Activated naive CD4-positive, alpha-beta T cell treated with anti-CD3 and anti-CD28 coated beads for 36 hours (primary cell): ENCODE measurements at regions of chr16 and their contacts with region 1.

Region 1: GRCh38 chr16:65671-66137 is 6.7 kb downstream of the RHBDF1 start:
- DNase-seq: peak; percentile 93
- H3K4me3 Mint-ChIP-seq: no peak overlapping the region
- H3K27ac Mint-ChIP-seq: no peak overlapping the region
- H3K4me1 Mint-ChIP-seq: peaks cover 4% of the 10 kb centered on the region
- H3K27me3 Mint-ChIP-seq: peaks cover 12% of the 10 kb centered on the region

Region 2: DNA sequence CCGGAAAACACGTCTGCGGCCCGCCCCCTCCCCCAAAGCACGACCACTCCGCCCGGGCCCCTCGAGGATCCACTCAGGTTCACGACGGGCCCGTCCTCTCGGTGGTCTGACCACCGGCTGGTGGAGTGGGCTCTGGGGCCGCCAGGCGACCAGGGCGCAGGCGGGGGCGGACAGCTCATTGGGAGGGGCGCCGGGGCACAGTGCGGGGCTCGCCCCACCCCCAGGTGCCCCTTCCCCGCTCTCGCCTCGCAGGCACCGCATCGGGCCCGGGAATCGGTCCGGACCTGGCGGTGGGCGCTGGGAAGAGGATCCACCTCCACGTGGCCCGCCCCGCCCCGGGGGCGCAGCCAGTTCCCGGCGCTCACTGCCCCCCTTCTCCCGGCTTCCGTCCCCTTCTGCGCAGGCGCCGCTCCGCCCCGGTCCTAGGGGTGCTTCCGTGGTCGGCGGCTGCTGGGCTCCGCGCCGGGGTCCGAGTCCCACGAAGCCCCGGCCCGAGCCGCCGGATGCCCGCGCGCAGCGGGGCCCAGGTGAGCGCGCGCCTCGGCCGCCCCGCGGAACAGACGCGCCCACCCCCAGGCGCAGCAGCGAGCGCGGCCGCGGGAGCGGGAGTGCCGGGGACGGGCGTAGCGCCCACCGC is 12.2 kb after region 1 on chr16 and contains the start of gene MPG:
- CTCF ChIA-PET with region 1: interaction called, 37 read pairs
- intact Hi-C with region 1: no loop called
- DNase-seq: peak; percentile 82
- H3K4me3 Mint-ChIP-seq: peak within 1 kb of the TSS; percentile 80
- H3K27ac Mint-ChIP-seq: peak within 1 kb of the TSS; percentile 80
- H3K4me1 Mint-ChIP-seq: peaks cover 21% of the 10 kb centered on the region
- H3K27me3 Mint-ChIP-seq: peaks cover 8% of the 10 kb centered on the region
- total RNA-seq, gene MPG: 38.6 to 38.8 TPM

Region 3: GRCh38 chr16:84718-85406 is 19.2 kb after region 1 on chr16:
- CTCF ChIA-PET with region 1: interaction called, 216 read pairs
- intact Hi-C with region 1: no loop called
- DNase-seq: peak; percentile 84
- H3K4me3 Mint-ChIP-seq: peak overlapping the region; percentile 21
- H3K27ac Mint-ChIP-seq: peak overlapping the region; percentile 79
- H3K4me1 Mint-ChIP-seq: peaks cover 28% of the 10 kb centered on the region
- H3K27me3 Mint-ChIP-seq: no peaks in the 10 kb centered on the region

Region 4: DNA sequence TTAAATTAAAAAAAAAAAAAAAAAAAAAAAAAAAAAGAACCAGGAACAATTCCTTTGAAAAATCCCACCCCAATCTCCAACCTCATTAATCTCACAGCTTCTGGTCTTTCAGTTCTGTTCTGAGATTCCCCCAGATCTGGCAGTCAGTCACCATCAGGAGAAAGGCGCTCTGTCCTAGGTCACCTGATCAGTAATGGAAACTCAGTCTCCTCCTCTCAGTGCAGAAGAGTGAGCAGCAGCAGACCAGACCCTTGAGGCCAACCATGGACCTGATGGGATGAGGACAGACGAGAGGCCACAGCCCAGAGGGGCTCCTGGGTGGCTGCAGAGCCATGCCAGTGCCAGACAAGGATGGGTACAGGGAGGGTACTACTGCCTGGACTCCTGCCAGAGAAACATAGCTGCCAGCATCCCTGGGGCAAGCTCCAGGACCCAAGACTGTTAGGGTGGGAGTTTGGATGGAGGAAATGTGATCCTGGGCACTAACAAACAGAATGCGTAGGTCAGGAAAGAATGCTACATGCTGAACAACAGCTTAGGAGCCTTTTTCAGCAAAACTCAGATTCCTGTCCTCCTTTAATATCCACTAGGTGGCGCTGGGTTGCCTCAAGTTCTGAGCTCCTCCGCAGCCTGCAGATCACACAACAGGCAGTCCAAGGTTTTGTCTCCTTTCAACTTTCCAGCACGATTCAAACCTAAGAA is 41.1 kb after region 1 on chr16:
- CTCF ChIA-PET with region 1: interaction called, 13 read pairs
- intact Hi-C with region 1: no loop called
- DNase-seq: peak; percentile 60
- H3K4me3 Mint-ChIP-seq: no peak overlapping the region
- H3K27ac Mint-ChIP-seq: no peak overlapping the region
- H3K4me1 Mint-ChIP-seq: no peaks in the 10 kb centered on the region
- H3K27me3 Mint-ChIP-seq: no peaks in the 10 kb centered on the region

Region 5: DNA sequence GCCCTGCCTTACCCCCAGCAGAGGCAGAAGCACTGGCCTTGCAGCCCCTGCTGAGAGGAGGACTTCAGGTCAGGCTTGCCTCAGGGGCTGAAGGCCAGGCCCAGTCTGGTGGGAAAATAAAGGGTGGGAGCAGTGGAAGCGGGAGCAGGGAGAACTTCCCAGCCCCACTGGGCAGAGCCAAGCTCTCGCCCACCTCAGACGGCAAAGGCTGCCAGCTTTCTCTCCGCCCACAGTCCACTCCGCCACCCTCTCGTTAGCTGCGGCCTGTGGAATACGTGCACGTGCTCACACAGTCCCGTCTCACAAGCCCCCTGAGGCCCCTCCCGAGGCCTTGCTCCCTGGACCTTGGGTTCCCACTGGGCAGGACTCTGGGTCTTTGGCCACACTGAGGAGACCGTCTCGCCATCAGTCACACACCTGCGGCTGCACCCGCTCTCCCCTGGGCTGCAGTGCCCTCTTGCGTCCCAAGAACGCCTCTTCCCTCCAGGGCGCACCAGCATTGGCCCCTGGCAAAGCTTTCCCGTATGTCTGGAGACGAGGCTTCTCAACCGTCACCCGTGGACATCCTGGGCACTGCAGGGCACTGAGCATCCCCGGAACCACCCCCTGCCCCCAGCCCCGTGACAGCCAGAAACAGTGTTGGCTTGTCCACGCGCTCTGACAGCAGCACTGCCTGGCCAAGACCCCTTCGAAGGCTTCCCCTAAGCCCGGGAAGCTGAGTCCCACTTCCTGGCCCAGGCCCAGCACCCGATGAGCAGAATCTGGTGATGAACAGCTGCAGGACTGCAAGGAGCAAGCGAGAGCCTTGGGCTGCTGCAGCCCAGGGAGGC is 296.4 kb after region 1 on chr16:
- CTCF ChIA-PET with region 1: interaction called, 8 read pairs
- intact Hi-C with region 1: loop called (anchors 1 kb)
- DNase-seq: peak; percentile 85
- H3K4me3 Mint-ChIP-seq: no peak overlapping the region
- H3K27ac Mint-ChIP-seq: no peak overlapping the region
- H3K4me1 Mint-ChIP-seq: peaks cover 4% of the 10 kb centered on the region
- H3K27me3 Mint-ChIP-seq: no peaks in the 10 kb centered on the region

Region 6: GRCh38 chr16:483341-484075 is 417.8 kb after region 1 on chr16:
- CTCF ChIA-PET with region 1: no interaction called
- intact Hi-C with region 1: no loop called
- DNase-seq: no peak
- H3K4me3 Mint-ChIP-seq: no peak overlapping the region
- H3K27ac Mint-ChIP-seq: no peak overlapping the region
- H3K4me1 Mint-ChIP-seq: no peaks in the 10 kb centered on the region
- H3K27me3 Mint-ChIP-seq: no peaks in the 10 kb centered on the region